ENCODE measurements at regions of chr6 and their contacts with region 1.

Region 1: DNA sequence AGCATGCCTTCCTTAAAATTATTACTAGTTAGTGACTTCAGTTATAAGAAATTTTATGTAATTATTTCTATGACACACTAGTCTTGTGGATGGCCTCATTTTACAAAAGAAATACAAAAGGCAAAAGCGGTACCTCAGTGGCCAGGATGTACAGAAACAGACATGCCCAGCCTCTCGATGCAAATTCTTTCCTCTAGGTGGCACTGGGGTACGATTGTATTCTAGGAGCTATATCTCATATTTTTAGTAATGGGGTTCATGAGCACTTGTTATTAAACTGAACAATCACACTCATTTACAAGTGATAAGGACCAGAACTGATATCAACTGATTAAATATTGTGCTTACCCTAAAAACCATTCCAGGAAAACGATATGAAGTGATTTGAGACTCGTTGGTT is 59.8 kb downstream of the SOD2 start:
- DNase-seq: peak; percentile 37
- ATAC-seq: peak; percentile 88
- H3K4me3 ChIP-seq: no peak overlapping the region
- H3K27ac ChIP-seq: no peak overlapping the region
- H3K4me1 ChIP-seq: no peaks in the 10 kb centered on the region
- H3K27me3 ChIP-seq: no peaks in the 10 kb centered on the region
- CTCF ChIP-seq: peak; percentile 42 to 88 (median 82); a peak in 5 of 6 replicates
- POLR2A ChIP-seq: no peak
- RAD21 ChIP-seq: peak; percentile 54

Region 2: DNA sequence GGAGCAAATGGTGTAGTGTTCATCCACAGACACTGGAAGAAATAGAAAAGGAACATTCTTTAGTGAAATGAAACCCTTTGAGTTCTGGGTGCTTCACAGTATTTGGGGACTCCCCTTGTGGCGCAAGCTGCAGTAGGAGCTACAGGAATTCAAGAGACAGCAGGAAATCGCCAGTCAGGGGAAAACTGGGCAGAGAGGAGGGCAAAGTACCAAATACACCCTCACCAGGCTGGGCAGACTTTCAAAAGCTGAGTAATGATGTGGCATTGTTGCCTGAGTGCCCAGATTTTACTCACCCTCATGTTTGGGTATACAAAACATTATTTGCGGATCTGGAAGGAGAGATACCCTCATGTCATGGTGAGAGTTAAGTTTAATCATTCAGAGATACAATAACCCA is 38.0 kb before region 1 on chr6:
- CTCF ChIA-PET with region 1: interaction called, 13 read pairs
- POLR2A ChIA-PET with region 1: no interaction called
- RAD21 ChIA-PET with region 1: no interaction called
- intact Hi-C with region 1: no loop called
- DNase-seq: peak; percentile 45
- ATAC-seq: peak; percentile 67
- H3K4me3 ChIP-seq: peak overlapping the region in 1 of 2 experiments; percentile 11; a peak in 2 of 4 replicates
- H3K27ac ChIP-seq: peak overlapping the region; percentile 65
- H3K4me1 ChIP-seq: peaks cover 18 to 27% of the 10 kb centered on the region in 2 experiments
- H3K27me3 ChIP-seq: no peaks in the 10 kb centered on the region
- CTCF ChIP-seq: no peak
- POLR2A ChIP-seq: no peak
- RAD21 ChIP-seq: no peak

Region 3: GRCh38 chr6:159620947-159621346 is 12.2 kb before region 1 on chr6:
- CTCF ChIA-PET with region 1: interaction called, 40 read pairs
- POLR2A ChIA-PET with region 1: no interaction called
- RAD21 ChIA-PET with region 1: no interaction called
- intact Hi-C with region 1: no loop called
- DNase-seq: no peak
- ATAC-seq: no peak
- H3K4me3 ChIP-seq: no peak overlapping the region
- H3K27ac ChIP-seq: no peak overlapping the region
- H3K4me1 ChIP-seq: no peaks in the 10 kb centered on the region
- H3K27me3 ChIP-seq: no peaks in the 10 kb centered on the region
- CTCF ChIP-seq: no peak
- POLR2A ChIP-seq: no peak
- RAD21 ChIP-seq: no peak

Region 4: GRCh38 chr6:159646733-159647132 is 13.5 kb after region 1 on chr6:
- CTCF ChIA-PET with region 1: interaction called, 23 read pairs
- POLR2A ChIA-PET with region 1: interaction called, 3 read pairs
- RAD21 ChIA-PET with region 1: no interaction called
- intact Hi-C with region 1: no loop called
- DNase-seq: no peak
- ATAC-seq: no peak
- H3K4me3 ChIP-seq: no peak overlapping the region
- H3K27ac ChIP-seq: no peak overlapping the region
- H3K4me1 ChIP-seq: peaks cover 10 to 11% of the 10 kb centered on the region in 2 experiments
- H3K27me3 ChIP-seq: no peaks in the 10 kb centered on the region
- CTCF ChIP-seq: no peak
- POLR2A ChIP-seq: no peak
- RAD21 ChIP-seq: no peak

Region 5: GRCh38 chr6:159654483-159655098 is 21.4 kb after region 1 on chr6:
- CTCF ChIA-PET with region 1: interaction called, 17 read pairs
- POLR2A ChIA-PET with region 1: no interaction called
- RAD21 ChIA-PET with region 1: no interaction called
- intact Hi-C with region 1: no loop called
- DNase-seq: peak; percentile 41
- ATAC-seq: peak; percentile 66
- H3K4me3 ChIP-seq: no peak overlapping the region
- H3K27ac ChIP-seq: no peak overlapping the region
- H3K4me1 ChIP-seq: no peaks in the 10 kb centered on the region
- H3K27me3 ChIP-seq: no peaks in the 10 kb centered on the region
- CTCF ChIP-seq: peak; percentile 32 to 74 (median 74); a peak in 5 of 6 replicates
- POLR2A ChIP-seq: no peak
- RAD21 ChIP-seq: peak; percentile 87

Region 6: GRCh38 chr6:159687341-159687740 is 54.1 kb after region 1 on chr6:
- CTCF ChIA-PET with region 1: no interaction called
- POLR2A ChIA-PET with region 1: no interaction called
- RAD21 ChIA-PET with region 1: no interaction called
- intact Hi-C with region 1: no loop called
- DNase-seq: no peak
- ATAC-seq: no peak
- H3K4me3 ChIP-seq: no peak overlapping the region
- H3K27ac ChIP-seq: no peak overlapping the region
- H3K4me1 ChIP-seq: peaks cover 8 to 15% of the 10 kb centered on the region in 2 experiments
- H3K27me3 ChIP-seq: no peaks in the 10 kb centered on the region
- CTCF ChIP-seq: no peak
- POLR2A ChIP-seq: no peak
- RAD21 ChIP-seq: no peak

Region 7: GRCh38 chr6:159890792-159891191 is 257.6 kb after region 1 on chr6 and contains the start of gene MAS1:
- CTCF ChIA-PET with region 1: no interaction called
- POLR2A ChIA-PET with region 1: no interaction called
- RAD21 ChIA-PET with region 1: no interaction called
- intact Hi-C with region 1: no loop called
- DNase-seq: no peak
- ATAC-seq: no peak
- H3K4me3 ChIP-seq: no peak within 1 kb of the TSS
- H3K27ac ChIP-seq: no peak within 1 kb of the TSS
- H3K4me1 ChIP-seq: no peaks in the 10 kb centered on the region
- H3K27me3 ChIP-seq: peaks cover 81% of the 10 kb centered on the region
- CTCF ChIP-seq: no peak
- POLR2A ChIP-seq: no peak
- RAD21 ChIP-seq: no peak
- total RNA-seq, gene MAS1: not detected

Region 8: DNA sequence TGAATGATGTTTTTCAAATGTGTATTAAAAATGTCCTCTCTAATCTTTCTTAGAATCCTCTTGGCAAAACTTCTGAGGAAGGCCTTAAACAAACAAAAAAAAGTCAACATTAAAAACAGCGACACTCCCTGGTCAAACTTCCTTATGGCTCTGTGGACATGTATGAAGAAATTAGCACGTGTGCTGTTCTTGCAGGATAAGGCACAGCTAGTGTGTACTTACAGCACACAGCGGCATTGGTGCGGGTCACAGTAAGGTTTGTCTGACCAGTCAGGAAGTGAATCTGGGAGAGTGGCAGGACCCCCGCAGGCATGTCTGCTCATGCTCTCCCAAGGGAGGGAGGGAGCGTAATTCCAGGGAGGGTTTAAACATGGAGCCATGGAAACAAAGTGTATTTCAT is 527.3 kb after region 1 on chr6:
- CTCF ChIA-PET with region 1: no interaction called
- POLR2A ChIA-PET with region 1: no interaction called
- RAD21 ChIA-PET with region 1: no interaction called
- intact Hi-C with region 1: no loop called
- DNase-seq: no peak
- ATAC-seq: peak; percentile 42; the same call in 1 of the 2 replicates
- H3K4me3 ChIP-seq: no peak overlapping the region
- H3K27ac ChIP-seq: no peak overlapping the region
- H3K4me1 ChIP-seq: no peaks in the 10 kb centered on the region
- H3K27me3 ChIP-seq: no peaks in the 10 kb centered on the region; the same call in 1 of the 2 replicates
- CTCF ChIP-seq: peak in 2 of 3 experiments; percentile 16 to 17; a peak in 2 of 6 replicates
- POLR2A ChIP-seq: no peak
- RAD21 ChIP-seq: no peak